Activated naive CD4-positive, alpha-beta T cell treated with anti-CD3 and anti-CD28 coated beads for 36 hours (primary cell): ENCODE measurements at regions of chr5 and their contacts with region 1.

Region 1: DNA sequence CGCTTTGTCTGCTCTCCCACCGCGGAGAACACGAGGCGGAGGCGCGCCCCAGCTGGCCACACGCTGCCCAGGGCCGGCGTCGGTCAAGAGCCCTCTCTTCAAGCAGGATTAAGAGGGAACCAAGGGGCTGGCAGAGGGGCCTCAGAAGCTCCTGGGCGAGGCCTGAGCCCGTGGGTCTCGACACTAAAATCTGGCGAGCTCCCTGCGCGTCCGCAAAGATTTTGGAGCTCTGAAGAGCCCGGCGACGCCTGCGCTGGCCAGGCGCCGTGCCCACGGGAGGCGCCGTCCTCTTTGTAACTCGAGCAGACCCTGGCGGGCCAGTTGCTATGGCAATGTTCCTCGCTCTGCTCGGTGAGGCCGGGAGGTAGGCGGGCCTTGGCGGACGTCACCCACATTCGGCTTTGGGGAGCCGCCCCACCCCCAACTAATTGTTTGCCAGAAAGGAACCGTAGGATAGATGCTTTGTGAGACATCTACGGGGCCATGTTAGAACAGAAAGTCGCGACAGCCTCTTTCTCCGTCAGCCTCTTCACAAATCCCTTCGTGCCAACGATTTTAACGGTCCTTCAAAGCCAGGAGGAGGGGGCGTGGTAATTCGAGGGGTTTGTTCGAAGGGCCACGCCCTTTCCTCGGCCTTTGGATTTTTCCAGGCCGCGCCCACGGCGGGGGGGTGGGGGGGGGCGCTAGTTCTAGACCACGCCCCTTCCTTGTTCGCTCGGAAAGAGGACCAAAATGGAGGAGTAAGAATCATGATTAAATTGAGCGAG is 714 bp upstream of the CNOT8 start:
- DNase-seq: peak; percentile 86
- H3K4me3 Mint-ChIP-seq: peak overlapping the region; percentile 88
- H3K27ac Mint-ChIP-seq: peak overlapping the region; percentile 94
- H3K4me1 Mint-ChIP-seq: peaks cover 35% of the 10 kb centered on the region
- H3K27me3 Mint-ChIP-seq: no peaks in the 10 kb centered on the region

Region 2: DNA sequence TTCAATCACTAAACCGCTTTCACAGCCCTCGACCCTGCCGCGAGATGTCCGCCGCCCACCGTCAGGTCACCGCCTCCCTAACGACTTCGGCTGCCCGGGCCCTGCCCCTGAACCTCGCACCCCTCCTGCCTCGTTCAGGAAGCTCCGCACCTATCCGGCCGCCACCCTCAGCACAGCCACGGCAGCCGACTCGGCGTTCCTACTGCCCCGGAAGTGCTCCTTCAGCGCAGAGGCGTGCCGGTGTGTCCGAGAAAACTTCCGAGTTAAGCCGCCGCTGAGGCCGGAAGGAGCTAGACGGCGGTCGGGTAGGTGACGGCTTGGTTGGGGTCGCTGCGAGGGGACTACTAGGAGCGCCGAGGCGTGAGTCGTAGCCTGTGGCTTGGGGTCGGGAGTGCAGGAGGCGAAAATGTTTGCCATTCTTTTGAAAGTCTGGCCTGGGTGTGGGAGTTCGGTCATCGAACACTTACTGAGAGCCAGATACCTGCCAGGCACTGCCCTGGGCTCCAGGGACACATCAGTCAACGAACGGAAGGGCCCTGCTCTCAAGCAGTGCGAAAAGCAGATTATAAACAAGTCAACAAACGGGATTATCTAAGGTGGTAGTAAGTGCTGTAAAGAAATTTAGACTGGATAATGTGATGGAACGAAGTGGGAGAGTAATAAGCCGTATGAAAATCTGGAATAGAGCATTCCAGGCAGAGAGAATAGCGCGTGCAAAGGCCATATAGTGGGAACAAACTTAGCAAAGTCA is 818.8 kb before region 1 on chr5 and contains the starts of genes FAM114A2 and MFAP3:
- CTCF ChIA-PET with region 1: no interaction called
- intact Hi-C with region 1: loop called (anchors 1 kb)
- DNase-seq: peak; percentile 93
- H3K4me3 Mint-ChIP-seq: peak within 1 kb of the TSS; percentile 95
- H3K27ac Mint-ChIP-seq: peak within 1 kb of the TSS; percentile 92
- H3K4me1 Mint-ChIP-seq: peaks cover 44% of the 10 kb centered on the region
- H3K27me3 Mint-ChIP-seq: no peaks in the 10 kb centered on the region
- total RNA-seq, gene FAM114A2: 25.0 to 25.9 TPM
- total RNA-seq, gene MFAP3: 7.9 to 8.4 TPM

Region 3: DNA sequence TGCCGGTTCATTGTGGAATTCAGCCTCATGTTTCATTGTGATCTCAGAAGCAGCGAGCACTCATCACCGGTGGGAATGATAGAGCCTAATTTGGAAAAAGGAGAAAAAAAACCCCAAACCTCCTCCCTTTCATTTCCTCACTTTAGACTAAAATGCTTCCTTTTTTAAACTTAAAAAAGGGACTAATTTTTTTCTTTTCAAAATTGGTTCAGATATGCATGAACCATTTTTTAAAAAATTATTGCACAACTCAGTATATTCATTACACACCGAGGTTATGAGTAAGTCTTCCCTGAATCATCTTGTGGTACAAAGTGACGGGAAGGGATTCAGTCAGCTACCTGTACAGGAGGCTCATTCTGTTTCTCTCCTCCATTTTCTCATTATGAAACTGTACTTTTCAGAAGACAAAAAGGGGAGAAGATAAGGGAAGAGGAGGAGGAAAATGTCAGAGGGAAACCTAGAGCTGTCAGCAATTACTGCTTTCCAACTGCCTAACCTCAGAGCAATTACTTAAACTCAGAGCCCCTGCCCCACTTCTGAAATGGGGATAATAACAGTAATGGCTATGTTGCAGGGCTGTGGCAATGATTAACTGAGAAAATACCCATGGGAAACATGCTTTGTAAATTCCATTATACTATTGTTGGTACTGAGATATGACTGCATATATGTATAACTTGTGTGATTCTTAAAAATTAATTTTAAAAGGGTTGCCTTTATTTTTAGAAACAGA is 643.2 kb before region 1 on chr5:
- CTCF ChIA-PET with region 1: no interaction called
- intact Hi-C with region 1: loop called (anchors 5 kb)
- DNase-seq: peak; percentile 35
- H3K4me3 Mint-ChIP-seq: peak overlapping the region; percentile 32
- H3K27ac Mint-ChIP-seq: peak overlapping the region; percentile 83
- H3K4me1 Mint-ChIP-seq: peaks cover 49% of the 10 kb centered on the region
- H3K27me3 Mint-ChIP-seq: no peaks in the 10 kb centered on the region

Region 4: DNA sequence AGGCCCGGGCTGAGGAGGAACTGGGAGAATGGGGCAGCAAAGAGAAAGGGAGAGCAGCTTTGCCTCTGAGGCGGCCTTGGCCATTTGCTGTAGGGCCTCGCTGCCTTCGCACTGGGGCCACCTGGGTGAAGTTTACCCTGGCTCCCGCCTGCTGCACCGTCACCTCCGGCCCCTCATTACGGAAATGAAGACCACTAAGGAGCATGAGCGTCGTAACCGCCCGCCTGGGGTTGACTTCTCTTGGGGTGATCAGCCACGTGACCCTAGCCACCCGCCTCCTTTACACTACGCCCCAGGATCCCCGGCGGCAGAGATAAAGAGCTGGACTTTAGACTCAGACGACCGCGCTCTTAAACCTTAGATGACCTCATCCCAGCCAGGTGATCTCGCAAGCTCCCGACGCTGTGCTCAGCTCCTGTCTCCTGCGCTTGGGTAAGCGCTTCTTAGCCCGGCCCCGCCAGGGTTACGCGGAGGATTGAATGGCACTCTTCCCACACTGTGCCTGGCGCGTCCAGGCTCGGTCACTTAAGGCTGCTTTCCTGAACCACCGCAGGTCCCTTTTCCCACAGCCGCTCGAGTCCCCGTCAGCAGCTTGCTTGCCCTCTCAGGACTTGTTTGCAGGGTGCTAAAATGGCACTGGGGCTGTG is 210.5 kb before region 1 on chr5:
- CTCF ChIA-PET with region 1: interaction called, 3 read pairs
- intact Hi-C with region 1: loop called (anchors 2 kb)
- DNase-seq: peak; percentile 14
- H3K4me3 Mint-ChIP-seq: peak overlapping the region; percentile 55
- H3K27ac Mint-ChIP-seq: no peak overlapping the region
- H3K4me1 Mint-ChIP-seq: peaks cover 12% of the 10 kb centered on the region
- H3K27me3 Mint-ChIP-seq: peaks cover 16% of the 10 kb centered on the region

Region 5: GRCh38 chr5:154754460-154755360 is 103.0 kb before region 1 on chr5:
- CTCF ChIA-PET with region 1: no interaction called
- intact Hi-C with region 1: loop called (anchors 1 kb)
- DNase-seq: peak; percentile 99
- H3K4me3 Mint-ChIP-seq: peak overlapping the region; percentile 93
- H3K27ac Mint-ChIP-seq: peak overlapping the region; percentile 97
- H3K4me1 Mint-ChIP-seq: peaks cover 31% of the 10 kb centered on the region
- H3K27me3 Mint-ChIP-seq: no peaks in the 10 kb centered on the region

Region 6: DNA sequence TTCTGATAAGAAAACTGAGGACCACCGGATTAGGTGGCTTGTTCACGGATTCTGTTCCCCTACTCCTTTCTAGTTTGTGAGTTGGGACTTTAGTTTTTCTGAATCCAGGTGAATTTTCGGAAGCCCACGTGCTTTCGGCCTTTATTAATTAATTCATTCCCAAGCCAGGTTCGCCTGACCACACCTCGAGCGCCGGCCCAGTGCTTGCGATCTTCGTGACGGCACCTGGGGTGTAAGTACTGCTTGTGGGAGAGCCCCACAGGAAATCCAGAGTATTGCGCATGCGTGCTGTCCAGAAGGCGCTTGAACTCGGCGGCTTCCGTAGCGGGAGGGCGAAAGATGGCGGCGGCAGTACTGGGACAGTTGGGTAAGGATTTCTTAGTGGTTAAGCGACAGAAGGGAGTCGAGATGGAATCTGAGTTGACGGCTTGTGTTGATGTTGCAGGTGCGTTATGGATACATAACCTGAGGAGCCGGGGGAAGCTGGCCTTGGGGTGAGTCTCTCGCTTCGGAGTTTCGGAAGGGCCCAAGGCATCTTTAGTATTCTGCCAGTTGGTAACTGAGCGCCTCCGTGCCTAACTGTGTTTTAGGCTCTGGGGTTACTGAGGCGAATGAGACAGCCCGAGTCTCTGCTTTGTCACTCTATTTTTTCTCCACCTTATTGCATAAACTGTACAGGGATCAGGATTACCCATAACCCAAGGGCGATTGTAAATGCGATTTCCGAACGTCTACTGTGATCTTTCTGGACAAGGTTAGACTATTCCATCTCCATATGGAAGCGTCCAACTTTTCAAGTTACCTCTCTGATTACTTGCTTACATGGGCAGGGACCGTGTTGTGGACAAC is 83.3 kb after region 1 on chr5 and contains the start of gene MRPL22:
- CTCF ChIA-PET with region 1: no interaction called
- intact Hi-C with region 1: loop called (anchors 1 kb)
- DNase-seq: peak; percentile 97
- H3K4me3 Mint-ChIP-seq: peak within 1 kb of the TSS; percentile 97
- H3K27ac Mint-ChIP-seq: peak within 1 kb of the TSS; percentile 96
- H3K4me1 Mint-ChIP-seq: peaks cover 36% of the 10 kb centered on the region
- H3K27me3 Mint-ChIP-seq: no peaks in the 10 kb centered on the region
- total RNA-seq, gene MRPL22: 88.3 to 92.2 TPM

Region 7: GRCh38 chr5:154986151-154986550 is 128.4 kb after region 1 on chr5:
- CTCF ChIA-PET with region 1: no interaction called
- intact Hi-C with region 1: no loop called
- DNase-seq: no peak
- H3K4me3 Mint-ChIP-seq: no peak overlapping the region
- H3K27ac Mint-ChIP-seq: no peak overlapping the region
- H3K4me1 Mint-ChIP-seq: no peaks in the 10 kb centered on the region
- H3K27me3 Mint-ChIP-seq: peaks cover 10% of the 10 kb centered on the region